Heart right ventricle (tissue), 16 donors: ENCODE measurements at regions of chr4 and their contacts with region 1.

Region 1: DNA sequence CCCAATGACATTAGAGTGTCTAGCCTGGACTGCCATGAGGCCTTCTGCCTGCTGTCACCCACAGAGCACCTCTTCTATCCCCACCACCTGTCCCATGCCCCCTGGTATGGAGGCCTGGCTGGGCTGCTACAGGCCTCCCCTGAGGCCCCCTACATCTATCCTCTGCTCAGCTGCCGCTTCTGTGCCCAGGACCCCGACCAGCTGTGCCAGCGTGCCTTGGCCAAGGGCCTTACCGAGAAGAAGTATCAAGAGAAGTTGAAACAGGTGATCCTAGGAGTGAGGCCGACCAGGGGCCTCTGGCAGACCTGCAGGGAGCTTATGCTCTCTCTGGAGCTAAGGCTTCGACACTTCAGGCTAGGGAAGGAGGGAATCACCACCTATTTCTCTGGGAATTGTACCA is 21.7 kb upstream of the TECRL start:
- DNase-seq: no peak
- ATAC-seq: peak in 2 of 8 donors; percentile 13 to 47
- H3K4me3 ChIP-seq: no peak overlapping the region
- H3K27ac ChIP-seq: no peak overlapping the region
- H3K4me1 ChIP-seq: no peaks in the 10 kb centered on the region
- H3K27me3 ChIP-seq: no peaks in the 10 kb centered on the region
- CTCF ChIP-seq: no peak

Region 2: GRCh38 chr4:64384237-64385203 is 46.4 kb before region 1 on chr4:
- intact Hi-C with region 1: no loop called
- DNase-seq: no peak
- ATAC-seq: peak; percentile 22 to 75 (median 46)
- H3K4me3 ChIP-seq: no peak overlapping the region
- H3K27ac ChIP-seq: no peak overlapping the region
- H3K4me1 ChIP-seq: peaks cover 0 to 30% (median 0%) of the 10 kb centered on the region in 9 donors
- H3K27me3 ChIP-seq: no peaks in the 10 kb centered on the region
- CTCF ChIP-seq: no peak

Region 3: GRCh38 chr4:64465263-64465662 is 34.3 kb after region 1 on chr4:
- intact Hi-C with region 1: loop called in 1 of 10 experiments (anchors 5 kb)
- DNase-seq: no peak
- ATAC-seq: peak in 3 of 8 donors; percentile 60 to 71 (median 64)
- H3K4me3 ChIP-seq: no peak overlapping the region
- H3K27ac ChIP-seq: no peak overlapping the region
- H3K4me1 ChIP-seq: peaks cover 0 to 6% (median 0%) of the 10 kb centered on the region in 9 donors
- H3K27me3 ChIP-seq: no peaks in the 10 kb centered on the region
- CTCF ChIP-seq: no peak